Dendritic cell treated with granulocyte-macrophage colony-stimulating factor and Interleukin-4, amounts not matched to agents 40 ng/mL and 50 ng/mL, for 4 days (primary cell): ENCODE measurements at regions of chr14 and their contacts with region 1.

Region 1: GRCh38 chr14:90235179-90235976 is 21.0 kb upstream of the PSMC1 start:
- H3K4me3 Mint-ChIP-seq: no peak overlapping the region
- H3K27ac Mint-ChIP-seq: no peak overlapping the region
- H3K4me1 Mint-ChIP-seq: peaks cover 6% of the 10 kb centered on the region
- H3K27me3 Mint-ChIP-seq: peaks cover 20% of the 10 kb centered on the region

Region 2: DNA sequence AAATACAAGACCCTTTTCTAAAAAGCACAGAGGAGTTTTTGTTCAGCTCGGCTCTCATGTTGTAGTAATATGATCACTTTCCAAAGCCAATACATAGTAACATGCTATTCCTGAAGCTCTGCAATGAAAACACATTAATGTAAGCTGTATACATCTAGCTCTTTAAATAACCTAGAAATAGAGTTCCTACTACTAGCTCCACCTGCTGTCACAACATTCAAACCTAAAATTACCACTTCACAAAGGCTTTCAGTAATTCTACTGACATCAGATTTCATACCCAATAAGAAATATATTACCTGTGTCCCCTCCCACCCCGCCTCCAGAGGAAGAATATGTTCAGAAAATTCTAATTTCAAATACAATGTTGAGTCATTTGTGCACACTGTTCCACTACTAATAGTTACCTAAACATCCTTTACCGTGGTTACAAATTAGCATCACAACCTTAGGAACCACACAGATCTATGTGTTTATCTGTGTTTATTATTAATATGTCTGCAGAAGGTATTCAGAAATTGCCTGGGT is 298.7 kb before region 1 on chr14:
- intact Hi-C with region 1: loop called (anchors 1 kb)
- H3K4me3 Mint-ChIP-seq: no peak overlapping the region
- H3K27ac Mint-ChIP-seq: no peak overlapping the region
- H3K4me1 Mint-ChIP-seq: no peaks in the 10 kb centered on the region
- H3K27me3 Mint-ChIP-seq: no peaks in the 10 kb centered on the region

Region 3: DNA sequence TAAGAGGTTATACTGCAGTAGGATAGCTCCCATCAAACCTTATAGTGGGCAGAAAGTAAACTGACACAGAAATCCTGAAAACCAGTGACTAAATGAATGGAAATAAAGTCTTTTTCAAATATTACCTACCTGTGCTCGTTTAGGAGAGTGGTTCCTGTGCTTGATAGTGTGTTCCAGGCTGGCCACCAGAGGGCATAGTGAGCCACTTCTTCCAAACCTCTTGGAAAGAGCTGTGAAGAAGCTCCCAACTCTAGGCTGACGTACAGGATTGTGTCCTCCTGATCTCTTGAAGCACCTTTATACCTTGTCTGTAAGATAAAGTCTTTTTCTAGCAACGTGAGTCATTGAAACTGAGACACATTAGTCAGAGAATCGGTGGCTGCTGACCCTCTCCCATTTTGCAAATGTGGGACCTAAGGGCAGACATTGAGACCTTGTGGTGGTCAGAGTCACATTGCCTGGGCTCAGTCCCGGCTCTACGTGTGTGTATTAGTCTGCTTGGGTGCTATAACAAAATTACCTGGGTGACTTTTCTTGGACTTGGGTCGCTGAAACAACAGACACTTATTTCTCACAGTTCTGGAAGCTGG is 262.0 kb before region 1 on chr14:
- intact Hi-C with region 1: loop called (anchors 1 kb)
- H3K4me3 Mint-ChIP-seq: no peak overlapping the region
- H3K27ac Mint-ChIP-seq: no peak overlapping the region
- H3K4me1 Mint-ChIP-seq: no peaks in the 10 kb centered on the region
- H3K27me3 Mint-ChIP-seq: no peaks in the 10 kb centered on the region

Region 4: DNA sequence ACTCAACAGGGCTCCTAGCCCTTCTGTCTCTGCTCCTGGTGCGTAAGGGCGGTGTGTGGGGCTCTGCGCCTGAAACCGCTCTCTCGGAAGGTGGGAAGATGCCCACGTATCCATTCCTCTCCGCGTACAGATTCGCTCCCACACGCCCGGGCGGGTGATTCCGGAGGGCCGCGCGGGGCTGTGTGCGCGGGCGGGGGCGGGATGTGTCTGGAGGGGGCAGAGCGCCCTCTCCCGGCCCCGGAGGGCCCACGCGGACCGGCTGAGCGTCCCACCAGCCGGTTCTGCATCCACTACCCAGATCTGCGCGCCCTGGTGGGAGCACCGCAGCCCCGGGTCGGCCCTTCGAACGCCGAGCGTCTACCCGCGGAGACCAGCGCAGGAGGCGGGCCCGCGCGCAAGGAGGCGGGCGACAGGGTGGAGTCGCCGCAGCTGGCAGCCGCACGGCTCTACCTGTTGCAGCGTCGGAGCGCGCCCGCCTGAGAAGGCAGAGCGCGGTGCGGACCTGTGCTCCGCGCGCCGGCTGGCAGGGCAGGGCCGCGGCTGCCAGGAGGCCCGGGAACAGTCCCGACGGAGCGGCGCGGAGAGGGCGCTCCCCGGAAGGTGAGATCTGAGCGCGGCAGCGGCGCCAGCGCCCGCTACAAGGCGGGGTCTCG is 174.9 kb before region 1 on chr14:
- intact Hi-C with region 1: loop called (anchors 5 kb)
- H3K4me3 Mint-ChIP-seq: peak overlapping the region; percentile 76
- H3K27ac Mint-ChIP-seq: no peak overlapping the region
- H3K4me1 Mint-ChIP-seq: peaks cover 54% of the 10 kb centered on the region
- H3K27me3 Mint-ChIP-seq: peaks cover 39% of the 10 kb centered on the region

Region 5: GRCh38 chr14:90263748-90264449 is 28.5 kb after region 1 on chr14:
- intact Hi-C with region 1: no loop called
- H3K4me3 Mint-ChIP-seq: no peak overlapping the region
- H3K27ac Mint-ChIP-seq: no peak overlapping the region
- H3K4me1 Mint-ChIP-seq: peaks cover under 1% of the 10 kb centered on the region
- H3K27me3 Mint-ChIP-seq: no peaks in the 10 kb centered on the region

Region 6: GRCh38 chr14:90440021-90440451 is 204.7 kb after region 1 on chr14:
- intact Hi-C with region 1: no loop called
- H3K4me3 Mint-ChIP-seq: no peak overlapping the region
- H3K27ac Mint-ChIP-seq: no peak overlapping the region
- H3K4me1 Mint-ChIP-seq: peaks cover 16% of the 10 kb centered on the region
- H3K27me3 Mint-ChIP-seq: peaks cover 8% of the 10 kb centered on the region